ENCODE measurements at regions of chr3 and their contacts with region 1.

Region 1: DNA sequence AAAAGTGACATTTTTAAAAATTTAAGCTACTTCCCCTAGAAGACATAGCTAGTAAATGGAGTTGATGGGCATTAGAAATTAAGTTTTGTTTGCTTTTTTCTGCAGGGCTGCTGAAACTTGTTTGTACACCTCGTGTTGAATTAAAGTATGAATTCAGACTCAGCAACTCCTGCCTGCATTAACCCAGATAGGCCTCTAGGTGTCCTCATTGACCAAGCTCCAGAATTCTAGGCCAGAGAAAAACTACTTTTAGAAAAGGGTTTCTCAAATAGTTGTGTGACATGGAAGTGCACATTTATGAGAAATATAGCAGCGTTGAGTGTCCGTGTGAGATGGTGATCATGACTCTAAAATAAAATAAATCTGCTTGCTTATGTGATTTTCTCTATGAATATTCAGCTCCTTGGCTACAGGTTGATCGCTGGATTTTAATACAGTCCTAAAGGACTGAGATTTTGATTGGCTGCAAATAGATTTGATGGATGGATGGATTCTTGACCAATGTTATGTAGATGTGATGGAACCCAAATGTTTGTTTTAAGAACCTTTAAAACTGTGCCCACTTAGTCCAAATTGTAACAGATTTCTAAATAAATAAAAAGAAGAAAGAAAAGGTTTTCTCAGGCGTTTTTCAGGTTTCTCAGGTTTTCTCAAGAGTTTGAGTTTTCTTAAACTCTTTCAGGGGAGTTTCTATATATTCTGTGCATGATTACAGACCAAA is 39.4 kb upstream of the LMOD3 start:
- DNase-seq: peak; percentile 51
- H3K4me3 ChIP-seq: peak overlapping the region in 1 of 2 experiments; percentile 30; a peak in 1 of 4 replicates
- H3K27ac ChIP-seq: no peak overlapping the region
- H3K4me1 ChIP-seq: no peaks in the 10 kb centered on the region
- H3K27me3 ChIP-seq: no peaks in the 10 kb centered on the region
- CTCF ChIP-seq: peak; percentile 98
- EP300 ChIP-seq: no peak
- RAD21 ChIP-seq: peak; percentile 99

Region 2: GRCh38 chr3:69129531-69129930 is 32.2 kb before region 1 on chr3:
- CTCF ChIA-PET with region 1: interaction called, 58 read pairs
- POLR2A ChIA-PET with region 1: no interaction called
- DNase-seq: no peak
- H3K4me3 ChIP-seq: no peak overlapping the region
- H3K27ac ChIP-seq: no peak overlapping the region
- H3K4me1 ChIP-seq: no peaks in the 10 kb centered on the region
- H3K27me3 ChIP-seq: no peaks in the 10 kb centered on the region
- CTCF ChIP-seq: no peak
- EP300 ChIP-seq: no peak
- RAD21 ChIP-seq: no peak

Region 3: DNA sequence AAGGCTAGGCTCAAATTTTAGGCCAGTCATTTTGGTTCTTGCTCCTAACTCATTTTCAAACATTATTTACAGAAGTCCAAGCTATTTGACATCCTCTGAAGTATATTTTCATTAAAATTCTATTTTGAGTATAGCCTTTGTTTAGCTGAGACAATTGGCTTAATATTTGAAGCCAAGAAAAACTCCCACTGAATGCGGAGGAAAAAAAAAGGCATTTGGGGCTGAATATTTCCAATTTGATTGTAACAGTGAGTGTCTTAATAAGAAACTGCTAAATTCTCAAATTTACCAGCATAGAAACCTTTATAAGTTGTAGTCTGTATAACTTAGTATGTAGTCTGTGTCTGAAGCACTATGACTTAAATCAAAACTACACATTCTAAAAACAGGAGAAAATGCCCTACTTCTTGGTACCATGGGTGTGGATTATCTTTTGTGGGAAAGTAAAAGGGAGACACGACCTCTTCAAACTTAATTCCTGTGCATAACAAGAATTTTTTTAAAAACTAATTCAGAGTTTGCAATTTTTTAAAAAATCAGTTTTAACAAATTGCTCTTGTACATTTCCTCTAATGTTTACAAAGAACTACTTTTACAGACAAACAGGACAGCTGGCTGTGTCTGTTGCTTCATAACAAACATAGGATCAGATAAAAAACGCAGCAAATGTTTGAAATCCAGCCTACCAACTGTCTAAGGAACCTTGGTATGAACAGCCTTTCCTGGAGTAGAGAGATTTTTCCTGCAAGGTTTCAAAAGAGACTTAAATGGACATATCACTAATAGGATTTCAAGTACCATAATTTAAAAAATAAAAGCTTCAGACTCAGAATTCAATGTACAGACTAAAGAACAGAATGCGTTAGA is 13.4 kb after region 1 on chr3:
- CTCF ChIA-PET with region 1: interaction called, 55 read pairs
- POLR2A ChIA-PET with region 1: no interaction called
- DNase-seq: no peak
- H3K4me3 ChIP-seq: no peak overlapping the region
- H3K27ac ChIP-seq: no peak overlapping the region
- H3K4me1 ChIP-seq: no peaks in the 10 kb centered on the region
- H3K27me3 ChIP-seq: no peaks in the 10 kb centered on the region
- CTCF ChIP-seq: no peak
- EP300 ChIP-seq: no peak
- RAD21 ChIP-seq: no peak

Region 4: DNA sequence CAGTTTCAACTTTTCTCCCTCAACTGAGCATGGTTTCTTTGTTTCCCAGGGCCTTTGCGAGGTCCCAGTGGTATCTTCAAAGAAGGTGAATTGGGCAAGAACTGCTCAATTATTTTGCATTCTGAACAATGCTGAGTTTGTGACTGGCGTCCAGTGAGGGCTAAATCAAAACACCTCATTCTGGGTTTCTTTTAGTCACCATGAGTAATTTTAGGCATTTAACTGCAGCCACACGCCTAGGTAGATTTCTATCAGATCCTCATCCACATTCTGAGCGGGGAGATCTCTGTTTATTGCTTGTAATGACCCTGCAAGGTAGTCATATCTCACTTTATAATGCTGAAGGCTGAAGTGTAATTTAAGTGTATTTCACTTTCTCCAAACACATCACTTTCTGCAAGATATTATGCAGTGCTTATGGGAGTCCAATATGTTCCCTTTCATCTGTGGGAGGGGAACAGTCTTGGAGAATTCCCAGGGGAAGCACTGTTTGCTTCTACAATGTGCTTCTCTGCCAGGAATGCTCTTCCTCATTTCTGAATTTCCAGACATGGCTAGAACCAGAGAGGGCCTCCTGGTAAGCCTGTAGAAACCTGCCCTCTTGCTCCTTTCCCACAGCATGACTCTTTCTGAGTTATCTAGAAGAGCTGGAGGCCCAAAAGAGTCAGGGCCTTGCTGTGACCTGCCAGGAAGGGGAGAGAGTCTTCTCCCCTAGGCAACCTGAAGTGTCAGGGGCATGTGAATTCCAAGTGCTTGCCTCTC is 132.4 kb after region 1 on chr3:
- CTCF ChIA-PET with region 1: interaction called, 26 read pairs
- POLR2A ChIA-PET with region 1: no interaction called
- DNase-seq: no peak
- H3K4me3 ChIP-seq: no peak overlapping the region
- H3K27ac ChIP-seq: peak overlapping the region in 1 of 2 experiments; percentile 16; a peak in 1 of 4 replicates
- H3K4me1 ChIP-seq: peaks cover 0 to 30% of the 10 kb centered on the region in 2 experiments; a peak in 3 of 4 replicates
- H3K27me3 ChIP-seq: no peaks in the 10 kb centered on the region
- CTCF ChIP-seq: no peak
- EP300 ChIP-seq: no peak
- RAD21 ChIP-seq: no peak

Region 5: GRCh38 chr3:69320871-69321271 is 159.1 kb after region 1 on chr3:
- CTCF ChIA-PET with region 1: interaction called, 33 read pairs
- POLR2A ChIA-PET with region 1: no interaction called
- DNase-seq: no peak
- H3K4me3 ChIP-seq: no peak overlapping the region
- H3K27ac ChIP-seq: no peak overlapping the region
- H3K4me1 ChIP-seq: no peaks in the 10 kb centered on the region; a peak in 1 of 4 replicates
- H3K27me3 ChIP-seq: no peaks in the 10 kb centered on the region
- CTCF ChIP-seq: no peak
- EP300 ChIP-seq: no peak
- RAD21 ChIP-seq: no peak

Region 6: GRCh38 chr3:69439643-69440270 is 278.0 kb after region 1 on chr3:
- CTCF ChIA-PET with region 1: interaction called, 17 read pairs
- POLR2A ChIA-PET with region 1: no interaction called
- DNase-seq: no peak
- H3K4me3 ChIP-seq: no peak overlapping the region; a peak in 1 of 4 replicates
- H3K27ac ChIP-seq: no peak overlapping the region
- H3K4me1 ChIP-seq: no peaks in the 10 kb centered on the region
- H3K27me3 ChIP-seq: no peaks in the 10 kb centered on the region
- CTCF ChIP-seq: peak; percentile 77
- EP300 ChIP-seq: no peak
- RAD21 ChIP-seq: peak; percentile 50

Region 7: DNA sequence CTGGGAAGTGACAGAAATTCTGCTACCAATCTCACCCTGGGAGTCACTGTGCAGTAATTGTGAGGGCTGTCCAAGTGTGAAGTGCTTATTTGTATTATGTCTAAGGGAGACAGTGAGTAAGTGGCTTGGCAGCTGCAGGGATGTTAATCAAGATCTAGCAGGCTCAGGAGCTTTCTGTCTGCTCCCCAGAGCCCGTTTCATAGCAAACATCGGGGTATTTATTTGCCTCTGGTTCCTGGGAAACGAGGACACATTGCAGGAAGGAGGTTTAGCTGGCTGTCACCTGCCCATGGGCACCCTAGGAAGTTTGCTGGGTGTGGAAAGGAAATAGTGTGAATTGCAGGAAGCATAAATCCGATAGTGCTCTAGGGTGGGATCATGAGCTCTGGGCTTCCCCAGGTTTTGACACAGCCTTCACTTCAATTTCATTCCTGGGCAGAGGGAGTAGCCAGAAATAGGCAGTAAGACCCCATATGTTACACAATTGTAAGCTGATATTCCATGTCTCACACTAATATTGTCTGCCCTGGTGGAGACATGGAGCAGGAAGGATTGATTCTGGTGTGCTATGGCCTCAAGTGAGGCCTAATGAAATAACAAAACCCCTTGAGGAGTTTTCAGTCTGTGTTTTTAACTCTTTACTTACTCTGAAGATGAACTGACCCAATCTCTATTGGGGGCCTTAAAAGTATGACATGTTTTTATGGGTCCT is 503.4 kb after region 1 on chr3:
- CTCF ChIA-PET with region 1: interaction called, 13 read pairs
- POLR2A ChIA-PET with region 1: no interaction called
- DNase-seq: peak; percentile 56
- H3K4me3 ChIP-seq: no peak overlapping the region
- H3K27ac ChIP-seq: peak overlapping the region in 1 of 2 experiments; percentile 58; a peak in 2 of 4 replicates
- H3K4me1 ChIP-seq: peaks cover 0 to 14% of the 10 kb centered on the region in 2 experiments; a peak in 2 of 4 replicates
- H3K27me3 ChIP-seq: peaks cover 9% of the 10 kb centered on the region; the same call in 1 of the 2 replicates
- CTCF ChIP-seq: no peak
- EP300 ChIP-seq: peak in 1 of 2 experiments; percentile 9; a peak in 1 of 4 replicates
- RAD21 ChIP-seq: no peak

Measured in SK-N-SH (cell line).